ENCODE measurements at regions of chr11 and their contacts with region 1.

Region 1: DNA sequence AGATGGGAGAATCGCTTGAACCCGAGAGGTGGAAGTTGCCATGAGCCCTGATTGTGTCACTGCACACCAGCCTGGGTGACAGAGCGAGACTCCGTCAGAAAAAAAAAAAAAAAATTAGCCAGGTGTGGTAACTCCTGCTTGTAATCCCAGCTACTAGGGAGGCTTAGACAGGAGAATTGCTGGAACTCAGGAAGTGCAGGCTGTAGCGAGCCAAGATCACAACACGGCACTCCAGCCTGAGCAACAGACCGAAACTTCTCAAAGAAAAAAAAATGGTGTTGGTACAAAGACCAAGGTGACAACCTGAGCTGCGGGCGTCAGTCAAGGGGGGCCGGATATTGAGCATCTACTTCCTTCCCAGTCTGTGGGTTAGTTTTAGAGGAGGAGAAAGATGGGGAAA is 48.4 kb upstream of the HSPA8 start:
- DNase-seq: no peak
- ATAC-seq: no peak

Region 2: GRCh38 chr11:123166071-123166559 is 55.8 kb after region 1 on chr11:
- intact Hi-C with region 1: no loop called
- DNase-seq: peak; percentile 74
- ATAC-seq: peak; percentile 78

Region 3: GRCh38 chr11:123246749-123247495 is 136.6 kb after region 1 on chr11:
- intact Hi-C with region 1: loop called (anchors 5 kb)
- DNase-seq: peak; percentile 90
- ATAC-seq: peak; percentile 79